ENCODE measurements at regions of chr15 and their contacts with region 1.

Region 1: GRCh38 chr15:41079717-41080116 is 36.4 kb downstream of the INO80 start:
- DNase-seq: no peak
- H3K4me3 ChIP-seq: no peak overlapping the region
- H3K27ac ChIP-seq: no peak overlapping the region
- H3K4me1 ChIP-seq: no peaks in the 10 kb centered on the region
- H3K27me3 ChIP-seq: no peaks in the 10 kb centered on the region
- CTCF ChIP-seq: no peak

Region 2: GRCh38 chr15:41018502-41018901 is 61.2 kb before region 1 on chr15:
- intact Hi-C with region 1: no loop called
- DNase-seq: no peak
- H3K4me3 ChIP-seq: no peak overlapping the region
- H3K27ac ChIP-seq: peak overlapping the region in 1 of 2 donors; percentile 55
- H3K4me1 ChIP-seq: peaks cover 0 to 39% (median 21%) of the 10 kb centered on the region in 4 donors
- H3K27me3 ChIP-seq: no peaks in the 10 kb centered on the region
- CTCF ChIP-seq: peak; percentile 64 to 69

Region 3: GRCh38 chr15:41154412-41154811 is 74.7 kb after region 1 on chr15:
- intact Hi-C with region 1: loop called (anchors 10 kb)
- DNase-seq: no peak
- H3K4me3 ChIP-seq: no peak overlapping the region
- H3K27ac ChIP-seq: no peak overlapping the region
- H3K4me1 ChIP-seq: no peaks in the 10 kb centered on the region
- H3K27me3 ChIP-seq: peaks cover 0 to 8% of the 10 kb centered on the region in 2 donors
- CTCF ChIP-seq: no peak

Measured in tibial artery (tissue), 4 donors.